Caco-2 (cell line): ENCODE measurements at regions of chr13 and their contacts with region 1.

Region 1: GRCh38 chr13:53250266-53250875 is 221.8 kb downstream of the OLFM4 start:
- DNase-seq: peak in 1 of 2 experiments; percentile 72
- H3K4me3 ChIP-seq: no peak overlapping the region
- H3K4me3 Mint-ChIP-seq: no peak overlapping the region
- H3K27ac Mint-ChIP-seq: no peak overlapping the region
- H3K4me1 ChIP-seq: no peaks in the 10 kb centered on the region
- H3K4me1 Mint-ChIP-seq: no peaks in the 10 kb centered on the region
- H3K27me3 ChIP-seq: no peaks in the 10 kb centered on the region
- H3K27me3 Mint-ChIP-seq: peaks cover 15% of the 10 kb centered on the region
- CTCF ChIP-seq: peak; percentile 68 to 77

Region 2: GRCh38 chr13:53191091-53191490 is 59.3 kb before region 1 on chr13:
- CTCF ChIA-PET with region 1: no interaction called
- POLR2A ChIA-PET with region 1: no interaction called
- intact Hi-C with region 1: no loop called
- DNase-seq: peak; percentile 14 to 34
- H3K4me3 ChIP-seq: no peak overlapping the region
- H3K4me3 Mint-ChIP-seq: no peak overlapping the region
- H3K27ac Mint-ChIP-seq: no peak overlapping the region
- H3K4me1 ChIP-seq: peaks cover 12% of the 10 kb centered on the region; the same call in 1 of the 2 replicates
- H3K4me1 Mint-ChIP-seq: no peaks in the 10 kb centered on the region
- H3K27me3 ChIP-seq: no peaks in the 10 kb centered on the region
- H3K27me3 Mint-ChIP-seq: no peaks in the 10 kb centered on the region
- CTCF ChIP-seq: no peak

Region 3: DNA sequence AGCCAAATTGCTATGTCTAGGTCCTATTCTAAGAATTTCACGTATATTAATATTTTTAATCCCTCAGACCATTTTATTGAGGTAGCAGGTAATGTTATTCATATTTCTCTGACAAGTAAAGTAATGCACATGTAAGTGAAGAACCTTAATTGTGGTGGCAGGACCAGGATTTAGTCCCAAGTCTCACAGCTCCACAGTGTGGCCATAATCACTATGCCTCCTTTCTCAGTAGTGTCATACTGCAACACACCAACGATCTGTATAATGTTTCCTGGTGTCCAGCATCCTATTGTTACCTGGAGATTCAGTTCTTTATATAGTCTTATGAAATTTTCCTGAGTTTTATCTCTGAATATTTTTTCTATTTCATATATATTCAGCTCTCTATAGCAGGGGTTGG is 118.6 kb after region 1 on chr13:
- CTCF ChIA-PET with region 1: interaction called, 8 read pairs
- POLR2A ChIA-PET with region 1: no interaction called
- intact Hi-C with region 1: loop called (anchors 1 kb)
- DNase-seq: peak in 1 of 2 experiments; percentile 12
- H3K4me3 ChIP-seq: no peak overlapping the region
- H3K4me3 Mint-ChIP-seq: no peak overlapping the region
- H3K27ac Mint-ChIP-seq: no peak overlapping the region
- H3K4me1 ChIP-seq: no peaks in the 10 kb centered on the region
- H3K4me1 Mint-ChIP-seq: no peaks in the 10 kb centered on the region
- H3K27me3 ChIP-seq: no peaks in the 10 kb centered on the region
- H3K27me3 Mint-ChIP-seq: peaks cover 4% of the 10 kb centered on the region
- CTCF ChIP-seq: peak; percentile 28 to 29